Activated CD4-positive, alpha-beta T cell treated with anti-CD3 and anti-CD28 coated beads for 36 hours (primary cell): ENCODE measurements at regions of chr15 and their contacts with region 1.

Region 1: DNA sequence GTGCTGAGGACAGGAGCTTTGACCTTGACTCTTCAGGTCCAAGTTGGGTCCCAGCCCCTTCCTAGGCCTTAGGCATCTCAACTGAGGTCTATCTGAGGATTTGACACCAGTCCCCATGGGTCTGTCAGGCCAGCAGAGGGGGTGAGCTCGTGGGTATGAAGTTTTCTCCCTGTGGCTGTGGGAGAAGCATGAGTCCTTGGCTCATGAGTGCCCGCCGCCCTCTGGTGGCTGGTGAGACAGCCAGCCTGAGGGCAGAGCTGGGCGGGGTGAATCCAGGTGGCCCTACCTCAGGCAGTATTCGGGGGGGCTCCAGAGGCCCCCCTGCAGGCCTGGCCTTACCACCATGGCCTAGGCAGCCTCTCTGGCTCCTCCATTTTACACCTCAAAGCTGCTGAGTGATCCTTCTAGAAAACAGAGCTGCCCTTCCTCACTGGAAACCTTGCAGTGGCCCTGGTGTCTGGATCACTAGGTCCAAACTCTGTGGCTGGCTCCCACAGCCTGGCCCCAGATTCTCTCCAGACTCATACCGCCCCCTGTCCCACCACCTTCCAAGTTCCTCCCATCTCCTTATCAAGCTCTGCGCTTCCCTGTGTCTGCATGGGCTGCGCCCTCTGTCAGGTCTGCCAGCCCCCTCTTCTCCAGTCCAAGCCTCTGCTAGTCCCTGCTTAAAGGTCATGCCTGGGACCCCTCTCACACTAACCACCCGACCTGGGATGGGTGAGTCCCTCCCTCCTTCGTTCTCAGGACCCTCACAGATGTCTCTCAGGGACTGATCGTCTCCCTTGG is 16.1 kb downstream of the SH2D7 start:
- DNase-seq: peak; percentile 92
- ATAC-seq: peak; percentile 74
- H3K4me3 Mint-ChIP-seq: no peak overlapping the region
- H3K27ac Mint-ChIP-seq: no peak overlapping the region
- H3K4me1 Mint-ChIP-seq: peaks cover 32% of the 10 kb centered on the region
- H3K27me3 Mint-ChIP-seq: no peaks in the 10 kb centered on the region

Region 2: DNA sequence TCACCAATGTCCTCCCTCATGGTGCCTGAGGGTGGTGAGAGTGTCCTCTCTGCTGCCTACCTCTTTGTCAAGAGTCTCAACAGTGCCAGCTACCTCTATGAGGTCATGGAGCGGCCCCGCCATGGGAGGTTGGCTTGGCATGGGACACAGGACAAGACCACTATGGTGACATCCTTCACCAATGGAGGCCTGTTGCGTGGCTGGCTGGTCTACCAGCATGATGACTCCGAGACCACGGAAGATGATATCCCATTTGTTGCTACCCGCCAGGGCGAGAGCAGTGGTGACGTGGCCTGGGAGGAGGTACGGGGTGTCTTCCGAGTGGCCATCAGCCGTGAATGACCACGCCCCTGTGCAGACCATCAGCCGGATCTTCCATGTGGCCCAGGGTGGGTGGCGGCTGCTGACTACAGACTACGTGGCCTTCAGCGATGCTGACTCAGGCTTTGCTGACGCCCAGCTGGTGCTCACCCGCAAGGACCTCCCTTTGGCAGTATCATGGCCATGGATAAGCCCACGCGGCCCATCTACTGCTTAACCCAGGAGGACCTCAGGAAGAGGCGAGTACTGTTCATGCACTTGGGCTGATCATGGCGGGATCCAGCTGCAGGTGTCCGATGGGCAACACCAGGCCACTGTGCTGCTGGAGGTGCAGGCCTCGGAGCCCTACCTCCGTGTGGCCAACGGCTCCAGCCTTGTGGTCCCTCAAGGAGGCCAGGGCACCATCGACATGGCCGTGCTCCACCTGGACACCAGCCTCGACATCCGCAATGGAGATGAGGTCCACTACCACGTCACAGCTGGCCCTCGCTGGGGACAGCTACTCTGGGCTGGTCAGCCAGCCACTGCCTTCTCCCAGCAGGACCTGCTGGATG is 209.7 kb before region 1 on chr15:
- CTCF ChIA-PET with region 1: no interaction called
- POLR2A ChIA-PET with region 1: no interaction called
- intact Hi-C with region 1: no loop called
- DNase-seq: no peak
- ATAC-seq: no peak
- H3K4me3 Mint-ChIP-seq: no peak overlapping the region
- H3K27ac Mint-ChIP-seq: no peak overlapping the region
- H3K4me1 Mint-ChIP-seq: no peaks in the 10 kb centered on the region
- H3K27me3 Mint-ChIP-seq: no peaks in the 10 kb centered on the region

Region 3: GRCh38 chr15:77966540-77967290 is 141.8 kb before region 1 on chr15:
- CTCF ChIA-PET with region 1: interaction called, 39 read pairs
- POLR2A ChIA-PET with region 1: no interaction called
- intact Hi-C with region 1: loop called (anchors 1 kb)
- DNase-seq: peak; percentile 71
- ATAC-seq: peak; percentile 75
- H3K4me3 Mint-ChIP-seq: no peak overlapping the region
- H3K27ac Mint-ChIP-seq: no peak overlapping the region
- H3K4me1 Mint-ChIP-seq: no peaks in the 10 kb centered on the region
- H3K27me3 Mint-ChIP-seq: peaks cover 2% of the 10 kb centered on the region

Region 4: DNA sequence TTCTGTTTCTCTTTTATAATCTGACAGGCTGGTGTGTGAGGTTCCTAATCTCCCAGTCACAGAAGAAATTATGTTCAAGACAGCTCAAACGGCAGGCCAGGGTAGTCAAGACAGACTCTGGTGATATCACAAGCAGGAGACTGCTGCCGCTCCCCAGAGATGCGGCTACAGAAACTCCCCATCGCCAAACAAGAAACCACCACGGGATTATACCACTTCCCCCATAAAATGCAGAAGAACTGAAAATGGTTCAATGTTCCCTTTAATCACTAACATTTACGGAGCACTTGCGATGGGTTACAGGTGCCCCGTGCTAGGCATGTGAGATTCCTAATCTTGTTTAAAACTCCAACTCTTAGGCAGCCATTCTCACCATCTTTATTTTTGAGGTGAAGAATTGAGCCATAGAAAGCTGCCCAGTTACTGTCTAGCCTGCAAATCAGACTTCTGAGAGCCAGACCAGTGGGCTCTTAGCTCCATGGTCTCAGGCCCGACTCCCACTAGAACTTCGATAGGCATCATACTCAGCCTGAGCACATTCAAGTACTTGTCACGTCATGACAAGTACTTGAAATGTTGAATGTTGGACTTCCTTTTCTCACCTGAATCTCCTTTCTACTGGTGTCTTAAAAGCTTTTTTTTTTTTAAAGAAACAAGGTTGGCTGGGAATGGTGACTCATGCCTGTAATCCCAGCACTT is 89.4 kb before region 1 on chr15:
- CTCF ChIA-PET with region 1: interaction called, 15 read pairs
- POLR2A ChIA-PET with region 1: no interaction called
- intact Hi-C with region 1: no loop called
- DNase-seq: no peak
- ATAC-seq: peak; percentile 74
- H3K4me3 Mint-ChIP-seq: no peak overlapping the region
- H3K27ac Mint-ChIP-seq: peak overlapping the region; percentile 15
- H3K4me1 Mint-ChIP-seq: peaks cover 14% of the 10 kb centered on the region
- H3K27me3 Mint-ChIP-seq: no peaks in the 10 kb centered on the region

Region 5: DNA sequence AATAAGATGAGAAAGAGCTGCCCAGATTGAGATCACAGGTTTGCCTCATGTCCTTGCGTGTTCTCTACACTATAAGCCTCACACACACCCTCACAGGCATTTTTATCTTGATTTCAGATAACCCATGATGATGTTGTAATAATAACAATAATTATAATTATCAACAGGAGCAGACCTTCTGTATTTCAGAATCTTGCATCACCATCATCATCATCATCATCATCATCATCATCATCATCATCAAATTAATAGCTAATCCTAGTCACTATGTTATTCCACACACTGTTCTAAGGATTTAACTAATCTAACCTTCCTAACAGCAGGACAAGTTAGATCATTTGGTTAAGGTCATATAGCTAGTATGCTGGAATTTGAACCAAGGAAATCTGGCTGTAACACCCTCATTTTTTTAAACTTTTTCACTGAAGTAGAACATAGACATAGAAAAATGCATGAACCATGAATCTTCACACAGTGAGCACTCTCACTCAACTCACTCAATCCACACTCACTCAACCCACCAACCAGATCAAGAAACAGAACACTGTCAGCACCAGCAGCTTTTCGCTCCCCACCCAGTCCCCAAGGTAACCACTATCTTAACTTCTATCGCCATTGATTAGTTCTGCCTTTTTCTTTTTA is 17.9 kb before region 1 on chr15:
- CTCF ChIA-PET with region 1: interaction called, 10 read pairs
- POLR2A ChIA-PET with region 1: no interaction called
- intact Hi-C with region 1: no loop called
- DNase-seq: no peak
- ATAC-seq: no peak
- H3K4me3 Mint-ChIP-seq: no peak overlapping the region
- H3K27ac Mint-ChIP-seq: no peak overlapping the region
- H3K4me1 Mint-ChIP-seq: peaks cover 2% of the 10 kb centered on the region
- H3K27me3 Mint-ChIP-seq: no peaks in the 10 kb centered on the region

Region 6: GRCh38 chr15:78149068-78149804 is 40.7 kb after region 1 on chr15 and contains the start of gene IDH3A:
- CTCF ChIA-PET with region 1: no interaction called
- POLR2A ChIA-PET with region 1: no interaction called
- intact Hi-C with region 1: loop called in 1 of 2 experiments (anchors 1 kb)
- DNase-seq: peak; percentile 100
- ATAC-seq: peak; percentile 94
- H3K4me3 Mint-ChIP-seq: peak within 1 kb of the TSS; percentile 95
- H3K27ac Mint-ChIP-seq: peak within 1 kb of the TSS; percentile 96
- H3K4me1 Mint-ChIP-seq: peaks cover 41% of the 10 kb centered on the region
- H3K27me3 Mint-ChIP-seq: no peaks in the 10 kb centered on the region
- total RNA-seq, gene IDH3A: 129 to 135 TPM

Region 7: DNA sequence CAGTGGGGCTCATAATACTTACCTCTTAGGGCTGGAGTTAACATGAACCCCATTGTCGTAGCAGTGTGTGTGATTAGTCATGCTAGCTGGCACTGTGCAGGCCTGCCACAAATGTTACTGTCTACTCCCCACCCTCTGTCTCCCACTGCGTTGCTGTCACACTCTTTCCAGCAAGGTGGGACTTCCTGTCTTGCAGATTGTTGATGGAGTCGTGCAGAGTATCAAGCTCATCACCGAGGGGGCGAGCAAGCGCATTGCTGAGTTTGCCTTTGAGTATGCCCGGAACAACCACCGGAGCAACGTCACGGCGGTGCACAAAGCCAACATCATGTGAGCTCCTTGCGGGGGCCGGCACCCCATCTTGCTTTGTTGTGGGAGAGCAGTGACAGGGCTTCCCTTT is 53.5 kb after region 1 on chr15:
- CTCF ChIA-PET with region 1: no interaction called
- POLR2A ChIA-PET with region 1: no interaction called
- intact Hi-C with region 1: no loop called
- DNase-seq: peak; percentile 74
- ATAC-seq: peak; percentile 96
- H3K4me3 Mint-ChIP-seq: no peak overlapping the region
- H3K27ac Mint-ChIP-seq: peak overlapping the region; percentile 70
- H3K4me1 Mint-ChIP-seq: peaks cover 12% of the 10 kb centered on the region
- H3K27me3 Mint-ChIP-seq: no peaks in the 10 kb centered on the region

Region 8: GRCh38 chr15:78422571-78423340 is 314.3 kb after region 1 on chr15:
- CTCF ChIA-PET with region 1: no interaction called
- POLR2A ChIA-PET with region 1: no interaction called
- intact Hi-C with region 1: loop called (anchors 2 to 10 kb)
- DNase-seq: peak; percentile 80
- ATAC-seq: peak; percentile 83
- H3K4me3 Mint-ChIP-seq: no peak overlapping the region
- H3K27ac Mint-ChIP-seq: no peak overlapping the region
- H3K4me1 Mint-ChIP-seq: peaks cover 18% of the 10 kb centered on the region
- H3K27me3 Mint-ChIP-seq: no peaks in the 10 kb centered on the region

Region 9: DNA sequence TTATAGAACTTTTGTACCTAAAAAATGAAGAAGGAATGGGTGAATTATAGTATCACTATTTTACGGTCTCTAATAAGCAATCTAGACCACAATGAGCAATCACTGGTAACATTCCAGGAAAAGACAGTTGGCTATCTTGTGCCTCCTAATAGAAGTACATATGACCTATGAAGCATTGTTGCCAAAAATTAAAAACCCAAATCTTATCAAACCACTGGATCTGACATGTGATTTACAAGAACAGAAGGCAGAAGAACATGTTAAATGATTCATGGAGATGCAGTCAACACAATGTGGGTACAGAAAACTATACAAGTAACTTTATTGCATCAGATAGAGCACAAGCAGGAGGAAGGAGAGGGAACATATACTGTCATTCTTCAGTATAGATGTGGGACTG is 384.4 kb after region 1 on chr15:
- CTCF ChIA-PET with region 1: no interaction called
- POLR2A ChIA-PET with region 1: no interaction called
- intact Hi-C with region 1: no loop called
- DNase-seq: no peak
- ATAC-seq: no peak
- H3K4me3 Mint-ChIP-seq: no peak overlapping the region
- H3K27ac Mint-ChIP-seq: peak overlapping the region; percentile 51
- H3K4me1 Mint-ChIP-seq: peaks cover 6% of the 10 kb centered on the region
- H3K27me3 Mint-ChIP-seq: no peaks in the 10 kb centered on the region